ENCODE measurements at regions of chr17 and their contacts with region 1.

Region 1: DNA sequence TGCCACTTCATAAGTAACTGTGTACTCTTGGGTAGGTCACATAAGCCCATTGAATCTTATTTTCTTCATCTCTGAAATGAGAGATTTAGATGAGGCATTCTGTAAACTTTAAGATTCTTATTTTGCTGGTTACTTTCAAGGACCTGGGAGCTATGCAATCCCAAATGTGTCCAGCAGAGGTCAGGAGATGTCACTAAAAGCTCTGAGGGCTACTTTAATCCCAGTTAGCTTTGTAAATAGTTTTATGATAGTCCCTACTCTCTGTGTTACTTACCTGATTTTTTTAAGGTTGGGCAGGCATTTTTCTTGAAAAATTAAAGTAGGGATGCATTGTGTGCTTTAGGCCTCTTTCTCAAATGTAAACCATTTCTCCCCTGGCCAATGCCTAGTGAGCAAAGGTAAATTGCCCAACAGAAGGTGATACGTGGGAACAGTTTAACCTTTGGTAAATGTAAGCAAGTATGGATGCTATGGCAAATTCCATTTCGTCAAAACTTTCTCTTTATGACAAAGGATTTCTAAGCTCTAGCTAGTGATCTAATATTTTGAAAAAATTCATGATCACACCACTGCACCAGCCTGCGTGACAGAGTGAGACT is 57.1 kb upstream of the WSB1 start:
- DNase-seq: peak; percentile 78 to 79
- ATAC-seq: peak; percentile 70 to 80; a peak in 4 of 6 replicates
- H3K4me3 ChIP-seq: no peak overlapping the region
- H3K27ac ChIP-seq: peak overlapping the region; percentile 2 to 31; a peak in 4 of 6 replicates
- H3K4me1 ChIP-seq: peaks cover 24% of the 10 kb centered on the region
- CTCF ChIP-seq: peak; percentile 96
- EP300 ChIP-seq: no peak
- POLR2A ChIP-seq: no peak
- RAD21 ChIP-seq: peak; percentile 93 to 96

Region 2: DNA sequence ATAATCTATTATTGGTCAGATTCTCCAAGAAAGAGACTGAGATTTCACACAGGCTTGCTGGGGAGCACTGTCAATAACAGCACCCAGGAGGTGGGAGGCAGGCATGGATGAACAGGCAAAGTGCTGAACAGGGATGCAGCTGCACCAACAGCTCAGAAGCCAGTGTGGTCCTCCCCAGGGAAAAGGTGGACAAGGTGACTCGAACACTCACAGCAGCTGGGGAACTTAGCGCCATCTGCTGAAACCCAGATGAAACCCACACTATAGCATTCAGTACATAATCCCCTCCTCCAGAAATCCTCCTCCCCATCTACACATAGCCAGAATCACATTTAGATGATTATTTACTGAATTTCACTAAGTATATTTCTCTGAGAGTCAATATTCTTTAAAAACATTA is 198.1 kb before region 1 on chr17:
- CTCF ChIA-PET with region 1: no interaction called
- POLR2A ChIA-PET with region 1: no interaction called
- DNase-seq: peak in 1 of 2 experiments; percentile 31
- ATAC-seq: peak in 1 of 2 experiments; percentile 61; a peak in 2 of 6 replicates
- H3K4me3 ChIP-seq: no peak overlapping the region
- H3K27ac ChIP-seq: no peak overlapping the region
- H3K4me1 ChIP-seq: no peaks in the 10 kb centered on the region
- CTCF ChIP-seq: 0 out of 3 replicates have a peak, but pooled peaks have one; percentile 11
- EP300 ChIP-seq: no peak
- POLR2A ChIP-seq: no peak
- RAD21 ChIP-seq: no peak

Region 3: DNA sequence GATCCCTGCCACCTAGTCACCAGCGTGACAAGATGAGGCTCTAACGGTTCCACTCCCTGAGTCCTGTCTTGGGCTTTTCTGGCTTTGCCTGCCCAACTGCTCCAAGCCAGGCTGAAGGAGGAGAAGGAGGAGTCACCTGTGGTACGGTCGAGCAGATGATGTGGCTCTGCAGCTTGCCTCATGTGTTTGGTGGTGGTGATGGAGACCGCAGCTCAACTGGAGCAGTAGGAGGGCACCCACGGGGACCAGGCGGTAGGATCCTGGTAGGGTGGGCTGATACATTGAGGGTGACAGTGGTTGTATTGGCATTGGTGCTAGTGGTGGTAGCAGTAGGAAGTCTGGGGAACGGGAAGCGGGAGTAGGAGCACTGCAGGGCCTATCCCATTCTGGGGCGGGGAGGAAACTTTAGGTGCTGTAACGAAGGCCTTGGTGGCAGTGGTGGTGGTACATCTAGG is 145.7 kb before region 1 on chr17:
- CTCF ChIA-PET with region 1: no interaction called
- POLR2A ChIA-PET with region 1: no interaction called
- DNase-seq: no peak
- ATAC-seq: no peak
- H3K4me3 ChIP-seq: no peak overlapping the region
- H3K27ac ChIP-seq: no peak overlapping the region
- H3K4me1 ChIP-seq: no peaks in the 10 kb centered on the region
- CTCF ChIP-seq: no peak
- EP300 ChIP-seq: no peak
- POLR2A ChIP-seq: no peak
- RAD21 ChIP-seq: no peak

Region 4: GRCh38 chr17:27218719-27219488 is 17.9 kb before region 1 on chr17:
- CTCF ChIA-PET with region 1: interaction called, 17 read pairs
- POLR2A ChIA-PET with region 1: no interaction called
- DNase-seq: no peak
- ATAC-seq: no peak
- H3K4me3 ChIP-seq: no peak overlapping the region
- H3K27ac ChIP-seq: no peak overlapping the region
- H3K4me1 ChIP-seq: peaks cover 5% of the 10 kb centered on the region; the same call in 2 of the 3 replicates
- CTCF ChIP-seq: no peak
- EP300 ChIP-seq: no peak
- POLR2A ChIP-seq: no peak
- RAD21 ChIP-seq: no peak

Region 5: GRCh38 chr17:27265333-27265732 is 28.5 kb after region 1 on chr17:
- CTCF ChIA-PET with region 1: interaction called, 29 read pairs
- POLR2A ChIA-PET with region 1: no interaction called
- DNase-seq: peak; percentile 53 to 64
- ATAC-seq: peak; percentile 66 to 88; a peak in 5 of 6 replicates
- H3K4me3 ChIP-seq: no peak overlapping the region
- H3K27ac ChIP-seq: peak overlapping the region in 1 of 2 experiments; percentile 49; a peak in 3 of 6 replicates
- H3K4me1 ChIP-seq: peaks cover 19% of the 10 kb centered on the region
- CTCF ChIP-seq: no peak
- EP300 ChIP-seq: peak in 1 of 2 experiments; percentile 19; a peak in 1 of 5 replicates
- POLR2A ChIP-seq: no peak
- RAD21 ChIP-seq: no peak

Region 6: GRCh38 chr17:27306276-27306835 is 69.5 kb after region 1 on chr17:
- CTCF ChIA-PET with region 1: interaction called, 22 read pairs
- POLR2A ChIA-PET with region 1: no interaction called
- DNase-seq: no peak
- ATAC-seq: no peak
- H3K4me3 ChIP-seq: no peak overlapping the region
- H3K27ac ChIP-seq: no peak overlapping the region
- H3K4me1 ChIP-seq: peaks cover 23% of the 10 kb centered on the region
- CTCF ChIP-seq: no peak
- EP300 ChIP-seq: no peak
- POLR2A ChIP-seq: no peak
- RAD21 ChIP-seq: no peak

Region 7: GRCh38 chr17:27332485-27333409 is 95.9 kb after region 1 on chr17:
- CTCF ChIA-PET with region 1: interaction called, 306 read pairs
- POLR2A ChIA-PET with region 1: interaction called, 14 read pairs
- DNase-seq: peak; percentile 97 to 99
- ATAC-seq: peak; percentile 94 to 98
- H3K4me3 ChIP-seq: peak overlapping the region; percentile 47
- H3K27ac ChIP-seq: peak overlapping the region; percentile 87 to 91
- H3K4me1 ChIP-seq: peaks cover 24% of the 10 kb centered on the region
- CTCF ChIP-seq: peak; percentile 96
- EP300 ChIP-seq: peak; percentile 33 to 51; a peak in 3 of 5 replicates
- POLR2A ChIP-seq: peak; percentile 16; the same call in 1 of the 2 replicates
- RAD21 ChIP-seq: peak; percentile 95 to 100

Region 8: GRCh38 chr17:27407916-27408846 is 171.4 kb after region 1 on chr17:
- CTCF ChIA-PET with region 1: interaction called, 13 read pairs
- POLR2A ChIA-PET with region 1: no interaction called
- DNase-seq: peak; percentile 33 to 62
- ATAC-seq: peak; percentile 69 to 88
- H3K4me3 ChIP-seq: no peak overlapping the region
- H3K27ac ChIP-seq: peak overlapping the region; percentile 56 to 59
- H3K4me1 ChIP-seq: peaks cover 32% of the 10 kb centered on the region
- CTCF ChIP-seq: no peak; the same call in 2 of the 3 replicates
- EP300 ChIP-seq: no peak
- POLR2A ChIP-seq: no peak
- RAD21 ChIP-seq: no peak; a peak in 1 of 5 replicates

Region 9: GRCh38 chr17:27609611-27610303 is 372.9 kb after region 1 on chr17:
- CTCF ChIA-PET with region 1: interaction called, 11 read pairs
- POLR2A ChIA-PET with region 1: no interaction called
- DNase-seq: peak; percentile 46 to 53
- ATAC-seq: peak; percentile 82 to 88
- H3K4me3 ChIP-seq: no peak overlapping the region
- H3K27ac ChIP-seq: no peak overlapping the region
- H3K4me1 ChIP-seq: peaks cover 10% of the 10 kb centered on the region
- CTCF ChIP-seq: peak; percentile 44
- EP300 ChIP-seq: no peak
- POLR2A ChIP-seq: no peak
- RAD21 ChIP-seq: peak; percentile 46 to 70

Region 10: DNA sequence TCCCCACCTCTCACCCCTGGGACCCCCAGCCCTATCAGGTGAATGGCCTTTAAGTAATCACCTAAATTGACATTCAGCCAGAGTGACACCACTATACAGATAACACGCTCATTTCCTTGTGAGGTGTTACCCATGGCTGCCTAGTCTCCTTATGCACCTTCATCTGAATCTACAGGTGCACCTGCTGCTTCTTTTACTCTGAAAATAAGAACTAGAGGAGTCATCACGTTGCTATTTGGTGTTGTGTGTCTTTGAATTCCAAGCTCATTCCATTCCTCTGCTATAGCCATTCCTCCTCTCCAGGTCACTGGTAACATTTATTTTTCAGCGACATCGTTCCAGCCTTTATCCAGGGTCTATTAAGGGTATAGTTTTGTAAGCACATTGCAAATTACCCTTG is 404.0 kb after region 1 on chr17:
- CTCF ChIA-PET with region 1: no interaction called
- POLR2A ChIA-PET with region 1: no interaction called
- DNase-seq: no peak
- ATAC-seq: no peak
- H3K4me3 ChIP-seq: no peak overlapping the region
- H3K27ac ChIP-seq: no peak overlapping the region
- H3K4me1 ChIP-seq: no peaks in the 10 kb centered on the region
- CTCF ChIP-seq: no peak
- EP300 ChIP-seq: no peak
- POLR2A ChIP-seq: no peak
- RAD21 ChIP-seq: no peak